ENCODE measurements at regions of chr1 and their contacts with region 1.

Region 1: DNA sequence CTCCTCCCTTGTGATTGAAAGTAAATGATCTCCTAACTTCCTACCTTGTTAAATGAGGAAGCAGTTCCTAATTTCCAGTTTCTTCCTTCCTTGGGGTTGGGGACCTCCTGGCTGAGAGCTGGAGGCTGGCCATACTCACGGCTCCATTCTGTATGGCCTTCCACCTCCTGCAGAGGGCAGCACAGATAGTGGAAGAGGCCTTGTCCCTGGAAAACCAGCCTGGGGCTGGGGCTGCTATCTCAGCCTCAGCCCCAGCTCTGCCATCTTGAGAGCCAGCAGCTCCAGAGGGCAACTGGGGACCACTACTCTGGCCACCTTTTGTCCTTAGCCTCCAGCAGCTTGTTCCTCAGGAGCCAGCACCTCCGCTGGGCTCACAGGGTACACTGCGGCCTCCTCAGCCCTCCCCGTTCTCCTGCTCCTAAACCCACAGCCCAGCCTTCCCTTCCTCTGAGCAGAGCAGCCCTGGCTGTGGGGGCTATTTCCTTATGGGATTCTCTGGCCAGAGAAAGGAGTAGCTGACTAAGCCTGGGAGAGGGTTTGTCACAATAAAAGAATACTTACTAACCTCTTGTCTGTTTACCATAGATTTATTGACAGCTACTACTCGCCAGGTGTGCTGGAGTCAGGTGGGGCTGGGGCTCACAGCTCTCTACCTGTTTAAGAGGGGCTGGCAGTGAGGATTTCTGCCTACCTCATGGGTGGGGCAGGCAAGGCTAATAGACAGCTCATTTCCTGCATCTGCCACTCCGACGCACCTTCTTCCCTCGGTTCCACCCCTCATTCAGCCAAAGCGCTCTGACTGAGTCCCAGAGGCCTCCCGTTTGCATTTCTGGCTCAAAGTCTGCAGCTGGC is 6.3 kb downstream of the TMEM234 start:
- DNase-seq: peak; percentile 45 to 65 (median 56)
- H3K4me3 ChIP-seq: no peak overlapping the region
- H3K4me3 Mint-ChIP-seq: peak overlapping the region in 3 of 8 donors; percentile 21 to 66 (median 58)
- H3K27ac ChIP-seq: no peak overlapping the region
- H3K27ac Mint-ChIP-seq: peak overlapping the region; percentile 38 to 90 (median 72)
- H3K4me1 ChIP-seq: peaks cover 17% of the 10 kb centered on the region
- H3K4me1 Mint-ChIP-seq: peaks cover 13 to 37% (median 25%) of the 10 kb centered on the region in 4 donors
- H3K27me3 ChIP-seq: no peaks in the 10 kb centered on the region
- H3K27me3 Mint-ChIP-seq: no peaks in the 10 kb centered on the region

Region 2: DNA sequence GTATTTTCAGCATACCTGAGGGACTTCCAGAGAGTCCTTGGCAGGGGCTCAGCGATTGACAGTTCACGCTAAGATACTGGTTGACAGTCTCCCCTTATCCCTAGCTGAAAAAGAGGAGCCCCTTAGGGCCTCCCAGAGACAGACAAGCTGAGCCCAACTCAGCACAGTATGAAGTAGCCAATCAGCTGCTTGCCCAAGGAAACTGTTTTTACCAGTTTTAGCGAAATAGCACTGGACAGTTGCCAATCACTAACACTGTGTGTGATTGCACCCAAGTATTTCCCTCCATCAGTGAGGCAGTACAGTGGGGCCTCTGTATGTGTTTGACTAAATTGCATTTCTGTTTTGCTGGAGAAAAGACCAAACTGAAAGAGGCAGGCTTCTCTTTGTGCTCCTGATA is 175.1 kb before region 1 on chr1:
- CTCF ChIA-PET with region 1: no interaction called
- POLR2A ChIA-PET with region 1: no interaction called
- intact Hi-C with region 1: no loop called
- DNase-seq: no peak
- H3K4me3 ChIP-seq: no peak overlapping the region
- H3K4me3 Mint-ChIP-seq: no peak overlapping the region
- H3K27ac ChIP-seq: no peak overlapping the region
- H3K27ac Mint-ChIP-seq: peak overlapping the region in 1 of 7 donors; percentile 47
- H3K4me1 ChIP-seq: no peaks in the 10 kb centered on the region
- H3K4me1 Mint-ChIP-seq: peaks cover 2 to 6% (median 4%) of the 10 kb centered on the region in 4 donors
- H3K27me3 ChIP-seq: no peaks in the 10 kb centered on the region
- H3K27me3 Mint-ChIP-seq: no peaks in the 10 kb centered on the region

Region 3: DNA sequence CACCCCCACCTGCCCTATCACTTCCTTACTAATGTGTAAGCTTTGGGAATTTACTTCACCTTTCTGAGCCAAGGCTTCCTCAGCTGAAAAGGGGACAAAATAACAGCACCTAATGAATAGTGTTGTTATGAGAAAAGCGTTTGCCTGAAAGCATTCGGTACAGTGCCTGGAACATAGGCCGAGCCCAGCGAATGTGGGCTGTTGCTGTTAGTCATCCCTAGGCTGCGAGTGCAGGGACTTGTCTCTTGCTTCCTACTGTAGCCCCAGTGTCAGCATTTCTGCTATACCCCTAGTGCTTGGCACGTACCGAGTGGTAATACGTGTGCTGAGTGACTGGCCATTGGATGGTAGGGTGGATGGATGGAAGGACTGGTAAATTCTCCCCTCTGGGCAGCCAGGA is 124.7 kb before region 1 on chr1:
- CTCF ChIA-PET with region 1: no interaction called
- POLR2A ChIA-PET with region 1: no interaction called
- intact Hi-C with region 1: no loop called
- DNase-seq: no peak
- H3K4me3 ChIP-seq: no peak overlapping the region
- H3K4me3 Mint-ChIP-seq: no peak overlapping the region
- H3K27ac ChIP-seq: no peak overlapping the region
- H3K27ac Mint-ChIP-seq: no peak overlapping the region
- H3K4me1 ChIP-seq: no peaks in the 10 kb centered on the region
- H3K4me1 Mint-ChIP-seq: no peaks in the 10 kb centered on the region
- H3K27me3 ChIP-seq: no peaks in the 10 kb centered on the region
- H3K27me3 Mint-ChIP-seq: no peaks in the 10 kb centered on the region

Region 4: DNA sequence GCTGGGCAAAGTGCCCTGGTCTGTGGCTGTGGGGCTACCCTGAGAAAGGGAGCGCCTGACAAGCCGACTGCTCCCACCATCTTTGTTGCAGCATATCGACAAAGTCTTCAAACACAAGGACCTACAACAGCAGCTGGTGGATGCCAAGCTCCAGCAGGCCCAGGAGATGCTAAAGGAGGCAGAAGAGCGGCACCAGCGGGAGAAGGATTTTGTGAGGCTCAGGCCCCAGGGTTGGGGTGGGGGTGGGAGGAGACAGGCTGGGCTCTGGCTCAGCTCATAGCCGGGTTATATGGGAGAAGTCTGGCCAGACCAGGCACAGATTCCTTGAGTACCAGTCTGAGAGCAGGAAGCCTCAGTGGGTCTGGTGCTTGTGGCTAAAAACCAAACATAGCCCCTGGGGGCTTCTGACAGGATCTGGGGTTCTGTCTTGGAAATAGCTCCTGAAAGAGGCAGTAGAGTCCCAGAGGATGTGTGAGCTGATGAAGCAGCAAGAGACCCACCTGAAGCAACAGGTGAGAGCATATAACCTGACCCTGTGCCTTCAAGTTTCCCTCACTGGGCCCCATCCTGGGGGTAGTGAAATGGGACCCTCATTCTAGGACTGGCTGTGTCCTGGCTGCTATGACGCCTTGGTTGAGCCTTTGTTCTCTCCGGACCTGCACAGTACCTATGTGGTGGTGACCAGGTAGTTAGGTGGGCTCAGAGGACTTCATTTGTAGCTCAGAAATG is 23.5 kb before region 1 on chr1:
- CTCF ChIA-PET with region 1: interaction called, 22 read pairs
- POLR2A ChIA-PET with region 1: interaction called, 4 read pairs
- intact Hi-C with region 1: no loop called
- DNase-seq: no peak
- H3K4me3 ChIP-seq: no peak overlapping the region
- H3K4me3 Mint-ChIP-seq: no peak overlapping the region
- H3K27ac ChIP-seq: no peak overlapping the region
- H3K27ac Mint-ChIP-seq: peak overlapping the region in 1 of 7 donors; percentile 12
- H3K4me1 ChIP-seq: peaks cover 30% of the 10 kb centered on the region
- H3K4me1 Mint-ChIP-seq: peaks cover 26 to 42% (median 35%) of the 10 kb centered on the region in 4 donors
- H3K27me3 ChIP-seq: no peaks in the 10 kb centered on the region
- H3K27me3 Mint-ChIP-seq: no peaks in the 10 kb centered on the region

Region 5: DNA sequence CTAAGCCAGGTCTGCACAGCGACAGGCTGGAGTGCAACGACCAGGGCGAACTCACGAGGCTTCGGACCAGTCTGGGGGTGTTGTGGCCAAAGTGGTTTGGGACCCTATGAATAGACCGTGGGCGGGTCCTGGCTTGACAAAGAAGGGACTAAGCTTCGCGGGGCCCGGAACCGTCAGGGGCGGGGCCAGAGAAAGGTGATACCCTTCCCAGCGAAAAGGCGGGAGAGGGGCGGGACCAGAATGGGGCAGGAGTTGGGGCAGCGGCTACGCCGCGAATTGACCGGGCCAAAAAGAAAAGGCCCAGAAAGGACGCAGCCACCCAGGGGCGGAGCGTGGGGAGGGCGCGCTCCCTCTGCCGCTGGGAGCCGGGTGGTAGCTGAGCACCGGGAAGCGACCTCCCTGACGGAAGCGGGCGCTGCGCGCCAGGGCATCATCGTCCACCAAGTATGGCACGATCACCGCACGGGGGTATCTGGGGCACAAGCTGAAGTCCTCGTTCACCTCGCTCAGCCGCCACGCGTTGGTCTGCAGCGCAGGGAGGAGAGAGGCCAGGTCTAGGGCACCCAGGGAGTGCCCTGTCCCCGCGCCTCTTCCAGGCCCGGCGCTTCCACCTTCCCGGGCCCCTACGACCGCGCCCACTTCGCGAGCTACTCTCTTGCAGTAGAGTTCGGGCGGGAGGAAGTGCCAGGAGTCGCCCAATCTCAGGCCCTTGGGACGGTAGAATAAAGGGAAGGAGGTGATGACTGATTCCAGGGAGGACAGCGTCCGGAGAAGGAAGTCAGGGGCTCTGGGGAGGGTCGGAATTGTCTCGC is 24.5 kb after region 1 on chr1:
- CTCF ChIA-PET with region 1: interaction called, 35 read pairs
- POLR2A ChIA-PET with region 1: interaction called, 24 read pairs
- intact Hi-C with region 1: no loop called
- DNase-seq: peak; percentile 53 to 75 (median 55)
- H3K4me3 ChIP-seq: peak overlapping the region; percentile 81
- H3K4me3 Mint-ChIP-seq: peak overlapping the region; percentile 87 to 93 (median 90)
- H3K27ac ChIP-seq: peak overlapping the region; percentile 48
- H3K27ac Mint-ChIP-seq: peak overlapping the region; percentile 68 to 88 (median 79)
- H3K4me1 ChIP-seq: peaks cover 14% of the 10 kb centered on the region
- H3K4me1 Mint-ChIP-seq: peaks cover 0 to 35% (median 15%) of the 10 kb centered on the region in 4 donors
- H3K27me3 ChIP-seq: no peaks in the 10 kb centered on the region
- H3K27me3 Mint-ChIP-seq: no peaks in the 10 kb centered on the region

Region 6: DNA sequence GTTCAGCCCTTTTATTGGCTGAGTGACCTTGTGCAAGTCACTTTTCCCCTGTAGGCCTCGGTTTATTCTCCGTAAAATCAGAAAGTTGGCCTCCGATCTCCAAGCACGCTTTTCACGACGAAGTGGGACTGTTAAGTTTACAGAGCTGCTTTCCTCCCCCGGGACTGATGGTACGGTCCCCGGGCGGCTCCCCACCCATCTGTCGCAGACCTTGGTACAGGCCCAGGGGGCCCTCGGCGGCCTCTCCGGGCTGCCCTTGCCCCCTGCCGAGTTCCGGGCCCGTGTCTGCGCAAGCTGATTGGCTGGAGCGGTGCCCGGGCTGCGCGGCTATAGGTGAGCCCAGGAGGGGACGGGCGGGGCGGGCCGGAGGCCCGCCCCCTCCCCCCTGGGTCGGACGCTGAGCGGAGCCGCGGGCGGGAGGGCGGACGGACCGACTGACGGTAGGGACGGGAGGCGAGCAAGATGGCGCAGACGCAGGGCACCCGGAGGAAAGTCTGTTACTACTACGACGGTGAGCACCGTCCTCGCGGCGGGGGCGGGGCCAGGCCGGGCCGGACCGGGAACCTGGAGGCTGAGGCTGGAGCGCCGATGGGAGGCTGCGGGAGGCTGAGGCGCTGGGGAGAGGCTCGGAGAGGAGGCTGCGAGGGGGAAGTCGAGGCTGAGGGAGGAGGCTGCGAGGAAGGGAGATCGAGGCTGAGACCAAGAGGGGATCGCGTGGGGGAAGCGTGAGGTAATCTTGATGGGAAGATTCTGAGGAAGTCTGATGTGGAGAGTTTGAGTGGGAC is 76.0 kb after region 1 on chr1 and contains the start of gene HDAC1:
- CTCF ChIA-PET with region 1: interaction called, 35 read pairs
- POLR2A ChIA-PET with region 1: interaction called, 18 read pairs
- intact Hi-C with region 1: loop called (anchors 2 kb)
- DNase-seq: peak; percentile 96 to 97 (median 97)
- H3K4me3 ChIP-seq: peak within 1 kb of the TSS; percentile 83 to 93
- H3K4me3 Mint-ChIP-seq: peak within 1 kb of the TSS; percentile 97 to 100 (median 99)
- H3K27ac ChIP-seq: peak within 1 kb of the TSS; percentile 93
- H3K27ac Mint-ChIP-seq: peak within 1 kb of the TSS; percentile 94 to 99 (median 96)
- H3K4me1 ChIP-seq: peaks cover 62% of the 10 kb centered on the region
- H3K4me1 Mint-ChIP-seq: peaks cover 32 to 64% (median 47%) of the 10 kb centered on the region in 4 donors
- H3K27me3 ChIP-seq: no peaks in the 10 kb centered on the region
- H3K27me3 Mint-ChIP-seq: peaks cover 0 to 2% of the 10 kb centered on the region in 2 donors
- total RNA-seq, gene HDAC1: 174 to 190 TPM

Region 7: GRCh38 chr1:32345289-32345827 is 129.5 kb after region 1 on chr1:
- CTCF ChIA-PET with region 1: interaction called, 11 read pairs
- POLR2A ChIA-PET with region 1: interaction called, 3 read pairs
- intact Hi-C with region 1: no loop called
- DNase-seq: peak; percentile 43 to 58 (median 51)
- H3K4me3 ChIP-seq: no peak overlapping the region
- H3K4me3 Mint-ChIP-seq: peak overlapping the region in 6 of 8 donors; percentile 8 to 72 (median 42)
- H3K27ac ChIP-seq: no peak overlapping the region
- H3K27ac Mint-ChIP-seq: peak overlapping the region in 6 of 7 donors; percentile 26 to 75 (median 58)
- H3K4me1 ChIP-seq: peaks cover 44% of the 10 kb centered on the region
- H3K4me1 Mint-ChIP-seq: peaks cover 25 to 52% (median 40%) of the 10 kb centered on the region in 4 donors
- H3K27me3 ChIP-seq: no peaks in the 10 kb centered on the region
- H3K27me3 Mint-ChIP-seq: no peaks in the 10 kb centered on the region

Region 8: DNA sequence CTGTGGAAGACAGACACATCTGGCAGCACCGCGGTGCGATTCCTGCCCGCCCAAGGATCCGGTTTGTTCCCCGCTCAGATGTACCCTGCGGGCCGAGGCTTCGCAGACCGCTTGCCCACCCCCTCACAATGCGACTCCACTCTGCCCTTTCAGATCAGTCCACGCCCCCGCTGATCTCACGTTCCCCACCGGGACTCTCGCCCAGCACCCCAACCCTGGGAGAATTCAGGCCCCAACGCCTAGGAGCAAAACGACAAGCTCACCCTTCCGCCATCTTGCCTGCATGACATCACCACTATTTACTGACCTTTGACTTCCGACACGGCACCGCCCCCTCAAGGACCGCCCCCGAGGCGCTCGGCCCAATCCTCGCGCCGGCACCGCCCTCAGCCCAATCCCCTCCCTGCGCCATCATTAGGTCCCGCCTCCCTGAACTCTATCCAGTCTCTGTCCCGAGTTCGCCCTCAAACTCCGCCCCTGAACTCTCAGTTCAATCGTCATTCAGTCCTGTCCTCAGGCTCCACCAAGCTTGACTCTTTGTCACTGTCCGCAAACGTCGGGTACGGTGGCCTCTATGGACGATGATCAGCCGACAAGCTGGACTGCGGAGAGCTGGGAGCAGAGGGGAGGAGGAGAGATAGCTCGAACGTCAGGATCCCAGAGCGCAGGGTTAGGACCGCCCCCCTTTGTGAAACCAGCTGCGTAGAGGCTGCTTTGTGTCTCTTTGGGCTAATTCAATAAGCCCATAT is 178.5 kb after region 1 on chr1 and contains the start of gene BSDC1:
- CTCF ChIA-PET with region 1: interaction called, 24 read pairs
- POLR2A ChIA-PET with region 1: interaction called, 4 read pairs
- intact Hi-C with region 1: no loop called
- DNase-seq: peak; percentile 98 to 99 (median 99)
- H3K4me3 ChIP-seq: peak within 1 kb of the TSS; percentile 87
- H3K4me3 Mint-ChIP-seq: peak within 1 kb of the TSS; percentile 99 to 100 (median 100)
- H3K27ac ChIP-seq: peak within 1 kb of the TSS; percentile 95
- H3K27ac Mint-ChIP-seq: peak within 1 kb of the TSS; percentile 92 to 100 (median 100)
- H3K4me1 ChIP-seq: peaks cover 43% of the 10 kb centered on the region
- H3K4me1 Mint-ChIP-seq: peaks cover 5 to 25% (median 19%) of the 10 kb centered on the region in 4 donors
- H3K27me3 ChIP-seq: no peaks in the 10 kb centered on the region
- H3K27me3 Mint-ChIP-seq: peaks cover 0 to 1% of the 10 kb centered on the region in 2 donors
- total RNA-seq, gene BSDC1: 106 to 112 TPM

Measured in CD4-positive, alpha-beta memory T cell (primary cell).